ENCODE measurements at regions of chr9 and their contacts with region 1.

Region 1: GRCh38 chr9:25964239-25964638 is 286.0 kb upstream of the TUSC1 start:
- DNase-seq: peak; percentile 53
- H3K4me3 ChIP-seq: no peak overlapping the region
- H3K27ac ChIP-seq: no peak overlapping the region
- H3K4me1 ChIP-seq: no peaks in the 10 kb centered on the region
- H3K27me3 ChIP-seq: no peaks in the 10 kb centered on the region
- CTCF ChIP-seq: peak; percentile 40

Region 2: DNA sequence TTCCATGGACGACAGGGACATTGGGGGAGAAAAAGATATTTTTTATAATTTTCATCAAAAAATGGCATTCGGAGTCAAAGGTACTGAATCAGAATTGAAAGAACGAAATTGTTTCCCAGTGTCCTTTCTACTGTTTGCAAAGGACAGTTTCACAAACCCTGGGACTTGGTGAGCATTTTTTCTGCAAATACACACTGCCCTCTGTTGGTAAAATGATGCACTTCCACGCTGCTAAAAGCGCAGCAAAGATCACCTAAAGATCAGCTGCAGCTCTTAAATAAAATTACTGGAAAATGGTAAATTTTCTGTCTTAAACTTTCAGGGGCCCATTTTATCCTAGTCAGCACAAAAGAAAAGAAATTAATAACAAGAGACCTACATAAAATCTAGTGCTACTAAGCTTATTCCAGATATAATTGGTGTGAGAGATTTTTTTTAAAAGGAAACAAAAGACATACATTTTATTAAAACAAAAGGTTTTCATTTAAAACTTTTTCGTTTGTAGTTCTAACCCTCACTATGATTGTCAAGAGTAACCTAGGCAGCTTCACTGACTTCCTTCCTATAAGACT is 362.3 kb after region 1 on chr9:
- CTCF ChIA-PET with region 1: no interaction called
- POLR2A ChIA-PET with region 1: no interaction called
- intact Hi-C with region 1: loop called (anchors 2 kb)
- DNase-seq: peak; percentile 33
- H3K4me3 ChIP-seq: no peak overlapping the region
- H3K27ac ChIP-seq: no peak overlapping the region
- H3K4me1 ChIP-seq: no peaks in the 10 kb centered on the region
- H3K27me3 ChIP-seq: no peaks in the 10 kb centered on the region
- CTCF ChIP-seq: peak; percentile 65

Region 3: DNA sequence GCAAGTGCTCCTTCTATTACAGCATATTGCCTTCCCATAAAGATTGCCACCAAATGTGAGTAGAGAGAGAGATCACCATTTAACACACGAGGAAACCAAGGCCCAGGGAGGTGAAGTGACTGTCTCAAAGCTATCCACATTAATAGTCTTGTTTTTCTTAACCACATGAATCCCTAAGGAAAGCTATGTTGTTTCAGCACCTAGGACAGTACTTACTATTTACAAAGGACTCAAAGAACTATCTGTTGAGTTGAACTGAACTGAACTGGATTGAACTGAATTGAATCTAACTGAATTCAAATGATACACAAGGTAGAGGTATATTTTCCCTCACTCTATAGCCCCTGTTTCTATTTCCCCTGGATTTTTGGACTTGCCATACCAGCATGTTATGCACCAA is 498.0 kb after region 1 on chr9:
- CTCF ChIA-PET with region 1: no interaction called
- POLR2A ChIA-PET with region 1: no interaction called
- intact Hi-C with region 1: no loop called
- DNase-seq: peak; percentile 0
- H3K4me3 ChIP-seq: no peak overlapping the region
- H3K27ac ChIP-seq: no peak overlapping the region
- H3K4me1 ChIP-seq: no peaks in the 10 kb centered on the region
- H3K27me3 ChIP-seq: no peaks in the 10 kb centered on the region
- CTCF ChIP-seq: no peak

Region 4: GRCh38 chr9:26612211-26612610 is 648.0 kb after region 1 on chr9:
- CTCF ChIA-PET with region 1: no interaction called
- POLR2A ChIA-PET with region 1: no interaction called
- intact Hi-C with region 1: loop called (anchors 5 kb)
- DNase-seq: no peak
- H3K4me3 ChIP-seq: no peak overlapping the region
- H3K27ac ChIP-seq: no peak overlapping the region
- H3K4me1 ChIP-seq: no peaks in the 10 kb centered on the region
- H3K27me3 ChIP-seq: no peaks in the 10 kb centered on the region
- CTCF ChIP-seq: no peak

Region 5: GRCh38 chr9:26656003-26656870 is 692.0 kb after region 1 on chr9:
- CTCF ChIA-PET with region 1: no interaction called
- POLR2A ChIA-PET with region 1: no interaction called
- intact Hi-C with region 1: loop called (anchors 5 kb)
- DNase-seq: peak; percentile 24
- H3K4me3 ChIP-seq: no peak overlapping the region
- H3K27ac ChIP-seq: no peak overlapping the region
- H3K4me1 ChIP-seq: no peaks in the 10 kb centered on the region
- H3K27me3 ChIP-seq: no peaks in the 10 kb centered on the region
- CTCF ChIP-seq: peak; percentile 49

Region 6: GRCh38 chr9:26975693-26976059 is 1011.4 kb after region 1 on chr9:
- CTCF ChIA-PET with region 1: no interaction called
- POLR2A ChIA-PET with region 1: no interaction called
- intact Hi-C with region 1: loop called (anchors 10 kb)
- DNase-seq: peak; percentile 52
- H3K4me3 ChIP-seq: no peak overlapping the region
- H3K27ac ChIP-seq: no peak overlapping the region
- H3K4me1 ChIP-seq: no peaks in the 10 kb centered on the region
- H3K27me3 ChIP-seq: no peaks in the 10 kb centered on the region
- CTCF ChIP-seq: peak; percentile 55